Activated CD4-positive, alpha-beta memory T cell treated with anti-CD3 and anti-CD28 coated beads for 36 hours (primary cell): ENCODE measurements at regions of chr20 and their contacts with region 1.

Region 1: DNA sequence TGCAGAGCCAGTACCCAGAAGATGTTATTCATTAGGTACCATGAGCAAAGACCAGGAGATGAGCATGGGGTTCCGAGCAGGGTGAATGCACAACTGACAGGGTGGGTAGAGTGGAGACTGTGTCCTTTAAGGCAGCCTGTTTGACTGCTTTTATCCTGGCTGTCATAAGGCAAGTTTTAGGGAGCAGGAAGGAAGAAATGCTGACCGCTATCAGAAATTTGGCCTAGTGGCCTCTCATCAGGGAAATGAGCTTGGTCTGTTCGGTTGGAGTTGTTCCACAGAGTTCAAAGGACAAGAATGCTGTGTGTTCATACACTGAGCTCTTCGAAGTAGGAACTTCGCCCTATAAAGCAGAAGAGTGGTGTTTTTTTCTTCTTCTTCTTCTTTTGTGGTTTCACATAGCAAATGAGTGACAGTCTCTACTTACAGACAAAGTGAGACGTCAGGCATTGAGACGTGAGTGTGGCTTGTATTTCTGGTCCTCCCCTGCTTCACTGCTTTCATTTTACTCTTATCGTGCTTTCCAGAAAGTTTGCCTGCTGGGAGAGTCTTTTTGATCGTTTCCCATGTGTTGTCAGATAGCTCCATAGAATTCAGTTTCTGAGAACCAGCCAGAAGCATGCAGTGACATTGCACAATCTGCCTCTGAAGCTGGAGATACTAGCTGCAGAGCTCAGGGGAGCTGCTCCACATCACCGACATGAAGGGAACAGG is at the start of gene CASS4:
- DNase-seq: peak; percentile 63
- H3K4me3 Mint-ChIP-seq: peak within 1 kb of the TSS; percentile 83
- H3K27ac Mint-ChIP-seq: peak within 1 kb of the TSS; percentile 91
- H3K4me1 Mint-ChIP-seq: peaks cover 59% of the 10 kb centered on the region
- H3K27me3 Mint-ChIP-seq: no peaks in the 10 kb centered on the region
- total RNA-seq, gene CASS4: 7.8 to 8.6 TPM

Region 2: GRCh38 chr20:56245761-56246160 is 166.2 kb before region 1 on chr20:
- CTCF ChIA-PET with region 1: no interaction called
- POLR2A ChIA-PET with region 1: no interaction called
- intact Hi-C with region 1: no loop called
- DNase-seq: no peak
- H3K4me3 Mint-ChIP-seq: no peak overlapping the region
- H3K27ac Mint-ChIP-seq: no peak overlapping the region
- H3K4me1 Mint-ChIP-seq: no peaks in the 10 kb centered on the region
- H3K27me3 Mint-ChIP-seq: peaks cover 31% of the 10 kb centered on the region

Region 3: DNA sequence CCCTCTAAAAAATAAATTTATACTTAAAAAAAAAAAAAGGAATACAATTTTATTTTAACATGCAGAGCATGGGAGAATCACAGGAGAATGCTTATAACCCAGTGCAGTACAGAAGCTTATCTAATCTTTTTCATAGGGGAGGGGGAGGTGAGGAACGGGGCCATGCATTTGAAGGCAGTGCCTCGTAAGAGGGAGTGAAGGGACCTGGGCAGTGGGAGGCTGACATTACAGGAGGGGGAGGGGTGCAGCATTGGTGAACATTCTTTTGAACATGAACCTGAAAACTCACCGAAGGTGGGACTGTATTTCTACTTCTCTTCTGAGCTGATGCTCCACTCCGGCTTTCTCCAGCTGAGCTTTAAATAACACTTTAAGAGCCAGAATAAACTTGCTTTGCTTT is 29.2 kb before region 1 on chr20:
- CTCF ChIA-PET with region 1: no interaction called
- POLR2A ChIA-PET with region 1: no interaction called
- intact Hi-C with region 1: no loop called
- DNase-seq: no peak
- H3K4me3 Mint-ChIP-seq: no peak overlapping the region
- H3K27ac Mint-ChIP-seq: no peak overlapping the region
- H3K4me1 Mint-ChIP-seq: peaks cover 12% of the 10 kb centered on the region
- H3K27me3 Mint-ChIP-seq: no peaks in the 10 kb centered on the region

Region 4: GRCh38 chr20:56422076-56422823 is 10.3 kb after region 1 on chr20:
- CTCF ChIA-PET with region 1: interaction called, 6 read pairs
- POLR2A ChIA-PET with region 1: interaction called, 19 read pairs
- intact Hi-C with region 1: no loop called
- DNase-seq: no peak
- H3K4me3 Mint-ChIP-seq: peak overlapping the region; percentile 6
- H3K27ac Mint-ChIP-seq: peak overlapping the region; percentile 73
- H3K4me1 Mint-ChIP-seq: peaks cover 75% of the 10 kb centered on the region
- H3K27me3 Mint-ChIP-seq: no peaks in the 10 kb centered on the region

Region 5: DNA sequence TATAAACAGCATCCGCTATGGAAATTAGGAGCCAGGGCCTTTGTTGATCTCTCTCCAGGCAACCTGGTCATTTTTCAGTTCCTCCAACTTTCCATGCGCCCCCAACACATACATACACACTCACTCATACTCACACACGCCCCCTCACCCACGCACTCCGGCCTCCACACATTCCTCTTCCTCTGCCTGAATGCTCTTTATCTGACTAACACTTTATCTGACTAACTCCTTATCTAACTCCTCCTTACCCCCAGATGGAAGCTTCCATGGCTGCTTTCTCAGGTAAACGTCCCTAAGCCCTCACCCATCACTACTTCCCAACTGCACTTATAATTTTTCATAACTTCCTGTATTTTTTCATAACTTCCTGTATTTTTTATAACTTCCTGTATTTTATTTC is 17.6 kb after region 1 on chr20:
- CTCF ChIA-PET with region 1: interaction called, 4 read pairs
- POLR2A ChIA-PET with region 1: interaction called, 19 read pairs
- intact Hi-C with region 1: loop called (anchors 2 kb)
- DNase-seq: peak; percentile 79
- H3K4me3 Mint-ChIP-seq: peak overlapping the region; percentile 66
- H3K27ac Mint-ChIP-seq: peak overlapping the region; percentile 87
- H3K4me1 Mint-ChIP-seq: peaks cover 72% of the 10 kb centered on the region
- H3K27me3 Mint-ChIP-seq: no peaks in the 10 kb centered on the region

Region 6: GRCh38 chr20:56454754-56455153 is 42.8 kb after region 1 on chr20:
- CTCF ChIA-PET with region 1: interaction called, 7 read pairs
- POLR2A ChIA-PET with region 1: interaction called, 7 read pairs
- intact Hi-C with region 1: loop called (anchors 1 kb)
- DNase-seq: peak; percentile 42
- H3K4me3 Mint-ChIP-seq: no peak overlapping the region
- H3K27ac Mint-ChIP-seq: peak overlapping the region; percentile 81
- H3K4me1 Mint-ChIP-seq: peaks cover 37% of the 10 kb centered on the region
- H3K27me3 Mint-ChIP-seq: no peaks in the 10 kb centered on the region

Region 7: DNA sequence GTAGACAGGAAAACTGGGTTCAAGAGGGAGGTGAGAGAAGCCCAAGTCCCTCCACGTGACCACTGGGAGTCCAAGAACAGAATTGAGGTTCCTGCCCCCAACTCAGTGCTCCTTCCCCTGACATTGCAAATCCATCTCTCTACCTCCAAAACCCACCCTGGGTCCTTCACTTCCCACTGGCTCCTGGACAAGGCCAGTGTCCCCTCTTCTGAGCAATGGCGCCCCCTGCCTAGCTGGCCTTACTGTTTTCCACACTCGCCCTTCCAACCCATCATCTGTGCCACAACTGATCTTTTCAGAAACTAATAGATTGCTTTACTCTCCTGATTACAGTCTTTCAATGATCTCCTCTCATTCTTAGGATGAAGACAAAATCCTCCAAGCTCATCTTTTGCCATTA is 1616.2 kb after region 1 on chr20:
- CTCF ChIA-PET with region 1: no interaction called
- POLR2A ChIA-PET with region 1: no interaction called
- intact Hi-C with region 1: no loop called
- DNase-seq: peak; percentile 24
- H3K4me3 Mint-ChIP-seq: no peak overlapping the region
- H3K27ac Mint-ChIP-seq: no peak overlapping the region
- H3K4me1 Mint-ChIP-seq: no peaks in the 10 kb centered on the region
- H3K27me3 Mint-ChIP-seq: peaks cover 19% of the 10 kb centered on the region